ENCODE measurements at regions of chr2 and their contacts with region 1.

Region 1: GRCh38 chr2:6896930-6897759 is 19.6 kb downstream of the RSAD2 start:
- DNase-seq: peak in 6 of 9 donors; percentile 32 to 54 (median 50)
- ATAC-seq: peak; percentile 57
- H3K4me3 ChIP-seq: no peak overlapping the region
- H3K4me3 Mint-ChIP-seq: no peak overlapping the region
- H3K27ac ChIP-seq: no peak overlapping the region
- H3K27ac Mint-ChIP-seq: peak overlapping the region in 1 of 9 donors; percentile 48
- H3K4me1 ChIP-seq: no peaks in the 10 kb centered on the region
- H3K4me1 Mint-ChIP-seq: peaks cover 0 to 25% (median 17%) of the 10 kb centered on the region in 7 donors
- H3K27me3 ChIP-seq: no peaks in the 10 kb centered on the region
- H3K27me3 Mint-ChIP-seq: no peaks in the 10 kb centered on the region

Region 2: GRCh38 chr2:6832596-6833299 is 64.4 kb before region 1 on chr2:
- CTCF ChIA-PET with region 1: no interaction called
- POLR2A ChIA-PET with region 1: no interaction called
- intact Hi-C with region 1: no loop called
- DNase-seq: no peak
- ATAC-seq: no peak
- H3K4me3 ChIP-seq: no peak overlapping the region
- H3K4me3 Mint-ChIP-seq: peak overlapping the region in 1 of 10 donors; percentile 72
- H3K27ac ChIP-seq: no peak overlapping the region
- H3K27ac Mint-ChIP-seq: peak overlapping the region in 6 of 9 donors; percentile 0 to 92 (median 36)
- H3K4me1 ChIP-seq: no peaks in the 10 kb centered on the region
- H3K4me1 Mint-ChIP-seq: peaks cover 0 to 31% (median 7%) of the 10 kb centered on the region in 7 donors
- H3K27me3 ChIP-seq: no peaks in the 10 kb centered on the region
- H3K27me3 Mint-ChIP-seq: no peaks in the 10 kb centered on the region

Region 3: DNA sequence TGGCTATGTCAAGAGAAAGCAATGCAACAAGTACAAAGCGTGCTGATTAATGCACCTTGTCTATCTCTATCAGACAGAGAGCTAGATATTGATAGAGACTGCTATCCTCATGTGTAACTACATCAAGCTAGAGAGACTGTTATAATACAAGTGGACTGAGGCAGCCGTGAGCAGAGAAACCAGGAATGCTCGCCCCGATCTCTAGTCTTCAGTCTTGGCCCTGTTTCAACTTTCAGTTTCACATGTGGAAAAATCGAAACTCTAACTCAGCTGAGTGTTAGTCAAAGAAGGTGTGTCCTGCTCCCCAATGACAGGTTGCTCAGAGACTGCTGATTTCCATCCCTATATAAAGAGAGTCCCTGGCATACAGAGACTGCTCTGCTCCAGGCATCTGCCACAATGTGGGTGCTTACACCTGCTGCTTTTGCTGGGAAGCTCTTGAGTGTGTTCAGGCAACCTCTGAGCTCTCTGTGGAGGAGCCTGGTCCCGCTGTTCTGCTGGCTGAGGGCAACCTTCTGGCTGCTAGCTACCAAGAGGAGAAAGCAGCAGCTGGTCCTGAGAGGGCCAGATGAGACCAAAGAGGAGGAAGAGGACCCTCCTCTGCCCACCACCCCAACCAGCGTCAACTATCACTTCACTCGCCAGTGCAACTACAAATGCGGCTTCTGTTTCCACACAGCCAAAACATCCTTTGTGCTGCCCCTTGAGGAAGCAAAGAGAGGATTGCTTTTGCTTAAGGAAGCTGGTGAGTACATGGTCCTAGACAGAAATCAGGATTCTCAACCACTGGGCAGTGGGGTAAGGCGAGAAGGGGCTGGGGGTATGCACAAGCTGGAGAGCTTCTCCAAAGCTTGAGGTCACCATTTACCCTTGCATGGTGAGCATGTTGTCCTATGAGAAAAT is 19.5 kb before region 1 on chr2 and contains the start of gene RSAD2:
- CTCF ChIA-PET with region 1: interaction called, 12 read pairs
- POLR2A ChIA-PET with region 1: interaction called, 5 read pairs
- intact Hi-C with region 1: no loop called
- DNase-seq: peak in 8 of 9 donors; percentile 29 to 73 (median 64)
- ATAC-seq: peak; percentile 85
- H3K4me3 ChIP-seq: peak within 1 kb of the TSS; percentile 58
- H3K4me3 Mint-ChIP-seq: peak within 1 kb of the TSS; percentile 80 to 97 (median 90)
- H3K27ac ChIP-seq: peak within 1 kb of the TSS; percentile 59
- H3K27ac Mint-ChIP-seq: peak within 1 kb of the TSS; percentile 80 to 98 (median 91)
- H3K4me1 ChIP-seq: peaks cover 20 to 50% of the 10 kb centered on the region in 2 donors
- H3K4me1 Mint-ChIP-seq: peaks cover 36 to 94% (median 78%) of the 10 kb centered on the region in 7 donors
- H3K27me3 ChIP-seq: no peaks in the 10 kb centered on the region
- H3K27me3 Mint-ChIP-seq: no peaks in the 10 kb centered on the region
- total RNA-seq, gene RSAD2: 5.0 to 72.6 (median 5.6) TPM

Region 4: DNA sequence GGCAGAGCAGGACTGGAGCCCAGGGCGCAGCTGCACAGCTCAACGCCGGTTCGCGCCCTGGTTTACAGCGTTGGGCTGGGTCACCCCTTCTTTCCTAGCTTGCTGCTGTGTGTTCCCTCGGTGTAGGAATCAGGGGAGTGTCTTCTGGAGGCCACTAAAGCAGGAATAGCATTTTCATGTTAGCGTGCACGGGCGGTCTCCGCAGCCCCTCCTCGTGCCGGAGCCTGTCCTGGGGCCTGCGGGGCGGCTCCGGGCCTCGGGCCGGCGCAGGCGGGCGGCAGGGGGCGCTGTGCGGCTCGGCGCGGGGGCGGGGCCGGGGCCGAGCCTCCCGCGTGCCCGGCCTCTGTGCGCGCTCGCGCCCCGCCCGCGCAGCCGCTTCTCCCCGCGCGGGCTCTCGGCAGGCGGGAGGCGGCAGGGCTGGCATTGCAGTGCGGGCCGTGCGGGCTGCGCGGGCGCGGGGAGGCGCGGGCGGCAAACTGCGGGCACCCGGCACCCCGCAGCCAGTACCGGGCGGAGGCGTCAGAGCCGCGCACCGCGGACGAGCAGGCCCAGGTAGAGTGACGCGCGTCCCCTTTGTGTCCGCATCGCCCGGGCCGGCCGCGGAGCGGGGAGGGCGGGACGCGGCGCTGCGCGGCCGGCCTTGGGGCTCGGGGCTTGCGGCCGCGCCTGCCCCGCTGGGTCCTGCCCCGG is 20.1 kb after region 1 on chr2 and contains the start of gene RNF144A:
- CTCF ChIA-PET with region 1: interaction called, 39 read pairs
- POLR2A ChIA-PET with region 1: interaction called, 18 read pairs
- intact Hi-C with region 1: loop called (anchors 1 kb)
- DNase-seq: peak; percentile 63 to 91 (median 79)
- ATAC-seq: peak; percentile 95
- H3K4me3 ChIP-seq: peak within 1 kb of the TSS; percentile 61
- H3K4me3 Mint-ChIP-seq: peak within 1 kb of the TSS; percentile 78 to 87 (median 80)
- H3K27ac ChIP-seq: peak within 1 kb of the TSS; percentile 76
- H3K27ac Mint-ChIP-seq: peak within 1 kb of the TSS; percentile 20 to 99 (median 78)
- H3K4me1 ChIP-seq: peaks cover 25 to 80% of the 10 kb centered on the region in 2 donors
- H3K4me1 Mint-ChIP-seq: peaks cover 41 to 84% (median 77%) of the 10 kb centered on the region in 7 donors
- H3K27me3 ChIP-seq: no peaks in the 10 kb centered on the region
- H3K27me3 Mint-ChIP-seq: peaks cover 0 to 18% (median 0%) of the 10 kb centered on the region in 5 donors
- total RNA-seq, gene RNF144A: 40.0 to 74.4 (median 61.2) TPM

Region 5: DNA sequence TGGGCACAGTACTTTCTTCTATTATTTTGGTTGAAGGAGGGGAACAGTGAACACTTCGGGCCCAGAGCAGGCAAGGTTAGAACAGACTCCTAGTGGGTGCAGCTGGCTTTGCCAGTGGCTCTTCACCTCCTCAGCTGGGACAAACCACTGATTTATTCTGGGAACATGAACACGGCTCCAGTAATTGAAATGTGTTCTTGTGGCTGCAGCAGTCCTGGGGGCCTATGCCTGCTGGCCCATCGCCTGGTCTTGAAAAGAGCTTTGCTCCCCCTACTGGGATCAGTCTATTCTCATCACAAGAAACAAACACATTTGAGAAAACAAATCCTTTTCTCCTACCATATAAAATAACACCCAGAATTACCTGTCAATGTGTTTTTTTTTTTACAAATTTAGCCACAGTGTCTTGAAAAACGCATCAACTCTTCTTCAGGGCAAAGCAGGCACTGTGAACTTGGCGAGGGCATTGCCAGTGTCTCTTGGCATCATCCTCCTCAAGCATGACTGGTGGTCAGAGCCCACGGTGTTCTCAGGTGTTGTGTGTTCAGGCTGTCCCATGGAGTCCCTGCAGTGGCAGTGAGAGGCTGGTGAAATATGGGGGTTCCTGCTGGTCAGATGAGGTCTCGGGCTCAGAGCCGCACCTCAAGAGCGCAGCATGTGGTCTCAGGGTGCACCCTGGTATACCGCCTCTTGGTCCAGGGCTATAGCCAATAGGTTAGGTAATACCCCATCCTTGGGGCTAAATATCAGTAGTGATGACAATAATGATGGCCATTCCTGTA is 71.4 kb after region 1 on chr2:
- CTCF ChIA-PET with region 1: interaction called, 7 read pairs
- POLR2A ChIA-PET with region 1: no interaction called
- intact Hi-C with region 1: loop called (anchors 1 to 5 kb)
- DNase-seq: no peak
- ATAC-seq: no peak
- H3K4me3 ChIP-seq: no peak overlapping the region
- H3K4me3 Mint-ChIP-seq: no peak overlapping the region
- H3K27ac ChIP-seq: no peak overlapping the region
- H3K27ac Mint-ChIP-seq: peak overlapping the region in 3 of 9 donors; percentile 8 to 38 (median 26)
- H3K4me1 ChIP-seq: no peaks in the 10 kb centered on the region
- H3K4me1 Mint-ChIP-seq: peaks cover 11 to 60% (median 46%) of the 10 kb centered on the region in 7 donors
- H3K27me3 ChIP-seq: no peaks in the 10 kb centered on the region
- H3K27me3 Mint-ChIP-seq: no peaks in the 10 kb centered on the region

Region 6: GRCh38 chr2:7031547-7032245 is 134.6 kb after region 1 on chr2:
- CTCF ChIA-PET with region 1: interaction called, 25 read pairs
- POLR2A ChIA-PET with region 1: no interaction called
- intact Hi-C with region 1: loop called in 1 of 2 experiments (anchors 1 kb)
- DNase-seq: peak in 8 of 9 donors; percentile 22 to 83 (median 76)
- ATAC-seq: peak; percentile 93
- H3K4me3 ChIP-seq: no peak overlapping the region
- H3K4me3 Mint-ChIP-seq: peak overlapping the region in 3 of 10 donors; percentile 12 to 56 (median 34)
- H3K27ac ChIP-seq: peak overlapping the region; percentile 59
- H3K27ac Mint-ChIP-seq: peak overlapping the region in 8 of 9 donors; percentile 76 to 94 (median 90)
- H3K4me1 ChIP-seq: peaks cover 0 to 7% of the 10 kb centered on the region in 2 donors
- H3K4me1 Mint-ChIP-seq: peaks cover 12 to 31% (median 21%) of the 10 kb centered on the region in 7 donors
- H3K27me3 ChIP-seq: no peaks in the 10 kb centered on the region
- H3K27me3 Mint-ChIP-seq: no peaks in the 10 kb centered on the region

Region 7: GRCh38 chr2:7083577-7084509 is 186.7 kb after region 1 on chr2:
- CTCF ChIA-PET with region 1: no interaction called
- POLR2A ChIA-PET with region 1: no interaction called
- intact Hi-C with region 1: loop called in 1 of 2 experiments (anchors 1 kb)
- DNase-seq: peak in 3 of 9 donors; percentile 13 to 30 (median 19)
- ATAC-seq: no peak
- H3K4me3 ChIP-seq: no peak overlapping the region
- H3K4me3 Mint-ChIP-seq: no peak overlapping the region
- H3K27ac ChIP-seq: no peak overlapping the region
- H3K27ac Mint-ChIP-seq: no peak overlapping the region
- H3K4me1 ChIP-seq: no peaks in the 10 kb centered on the region
- H3K4me1 Mint-ChIP-seq: no peaks in the 10 kb centered on the region
- H3K27me3 ChIP-seq: peaks cover 0 to 3% of the 10 kb centered on the region in 2 donors
- H3K27me3 Mint-ChIP-seq: peaks cover 0 to 8% (median 0%) of the 10 kb centered on the region in 5 donors